ENCODE measurements at regions of chr13 and their contacts with region 1.

Region 1: GRCh38 chr13:30865123-30866049 is 40.7 kb upstream of the MEDAG start:
- DNase-seq: peak; percentile 78
- CTCF ChIP-seq: peak; percentile 93

Region 2: DNA sequence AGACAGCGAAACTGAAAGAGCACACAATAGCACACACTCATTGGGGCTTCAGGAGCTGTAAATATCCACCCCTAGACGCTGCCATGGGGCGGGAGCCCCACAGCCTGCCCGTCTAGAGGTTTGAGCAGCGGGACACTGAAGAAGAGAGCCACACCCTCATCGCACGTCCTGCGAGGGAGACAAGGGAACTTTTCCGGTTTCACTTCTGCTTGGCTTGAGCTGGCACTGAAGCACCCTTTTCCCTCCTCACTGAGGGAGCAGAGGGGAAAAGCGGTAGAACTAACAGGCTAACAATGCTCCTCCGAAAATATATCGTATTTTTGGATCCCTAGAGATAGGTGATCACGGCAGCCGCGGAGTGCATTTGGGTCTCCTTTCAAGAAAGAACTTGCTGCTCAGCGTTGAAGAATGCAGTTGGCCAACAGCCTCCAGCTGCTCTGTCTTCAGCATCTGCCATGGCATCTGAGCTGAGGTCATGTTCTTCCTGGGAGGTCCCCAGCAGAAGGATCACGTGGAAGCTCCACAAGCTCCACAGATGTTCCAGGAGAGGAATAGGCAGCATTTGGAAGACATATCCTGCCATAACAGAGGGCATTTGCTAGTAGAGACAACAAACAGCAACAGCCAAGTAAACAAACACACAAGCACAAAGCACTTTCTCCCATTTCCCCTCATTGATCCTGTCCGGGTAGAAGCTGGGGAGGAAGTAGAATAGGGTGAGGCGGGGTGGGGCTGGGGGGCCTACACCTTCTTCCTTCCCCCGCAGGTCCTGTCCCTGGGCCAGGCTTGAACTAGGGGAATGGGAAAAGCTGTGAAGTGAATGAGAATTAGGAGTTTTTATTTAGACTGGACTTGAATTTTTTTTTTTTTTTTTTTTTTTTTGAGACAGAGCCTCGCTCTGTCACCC is 174.9 kb before region 1 on chr13:
- CTCF ChIA-PET with region 1: no interaction called
- POLR2A ChIA-PET with region 1: no interaction called
- DNase-seq: no peak
- CTCF ChIP-seq: no peak

Region 3: DNA sequence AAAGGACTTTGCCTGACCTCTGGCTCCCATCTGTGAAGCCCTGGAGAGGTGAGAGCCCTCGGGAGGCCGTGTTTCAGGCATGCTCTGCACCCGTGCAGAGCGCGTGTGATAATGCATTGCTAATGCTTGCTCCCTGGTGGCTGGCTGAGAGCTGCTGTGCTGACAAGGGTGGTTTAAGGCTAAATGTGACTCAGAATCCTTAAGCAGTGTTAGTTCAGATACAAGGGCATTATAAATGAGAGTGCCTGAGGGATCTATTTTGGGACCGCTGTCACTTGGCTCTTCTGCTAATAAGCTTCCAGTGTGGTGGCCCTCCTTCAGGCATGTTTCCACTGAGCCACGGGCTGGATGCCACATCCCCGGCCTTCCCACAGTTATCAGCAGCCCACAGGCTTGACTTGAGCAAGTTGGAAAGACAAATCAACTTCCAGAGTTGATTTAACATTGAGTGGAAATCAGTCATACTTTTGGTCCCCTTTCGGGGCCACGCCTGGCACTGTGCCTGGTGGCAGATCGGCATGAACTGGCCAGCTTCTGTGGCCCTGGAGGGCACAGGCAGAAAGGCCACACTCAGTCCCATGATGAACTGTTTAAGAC is 113.1 kb before region 1 on chr13:
- CTCF ChIA-PET with region 1: no interaction called
- POLR2A ChIA-PET with region 1: no interaction called
- DNase-seq: no peak
- CTCF ChIP-seq: no peak

Region 4: DNA sequence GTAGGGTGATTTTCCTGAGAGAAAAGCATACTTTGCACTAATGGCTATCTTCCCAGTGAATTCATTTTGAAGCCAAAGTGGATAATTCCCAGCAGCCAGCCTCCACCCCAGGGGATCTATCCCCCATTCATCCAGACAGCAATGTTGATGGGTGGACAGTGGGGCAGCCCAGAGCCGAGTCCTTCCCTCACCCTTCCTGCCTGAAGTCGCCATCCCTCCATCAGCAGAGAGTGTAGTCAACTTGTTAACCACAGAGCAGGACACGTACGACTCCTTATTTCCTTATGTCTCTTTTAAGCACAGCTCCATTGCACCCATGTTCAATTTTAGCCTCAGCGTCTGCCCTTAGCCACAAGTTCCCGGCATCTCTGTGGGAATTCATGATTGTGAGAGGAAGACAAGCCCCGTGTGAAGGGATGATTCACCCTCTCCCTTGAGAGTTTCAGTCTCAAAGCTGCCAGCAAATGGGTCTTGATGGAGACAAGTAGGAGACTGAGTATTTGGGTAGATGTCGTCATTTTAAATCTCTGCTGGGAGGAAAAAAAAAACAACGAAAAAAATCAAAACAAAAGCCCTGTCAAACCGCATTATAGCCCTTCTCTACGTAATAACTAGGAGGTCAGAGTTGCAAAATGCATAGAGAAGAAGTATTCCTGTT is 17.6 kb before region 1 on chr13:
- CTCF ChIA-PET with region 1: interaction called, 30 read pairs
- POLR2A ChIA-PET with region 1: no interaction called
- DNase-seq: no peak
- CTCF ChIP-seq: no peak

Region 5: GRCh38 chr13:30880856-30881155 is 15.4 kb after region 1 on chr13:
- CTCF ChIA-PET with region 1: interaction called, 22 read pairs
- POLR2A ChIA-PET with region 1: no interaction called
- DNase-seq: no peak
- CTCF ChIP-seq: no peak

Region 6: GRCh38 chr13:30892966-30893365 is 27.6 kb after region 1 on chr13:
- CTCF ChIA-PET with region 1: interaction called, 10 read pairs
- POLR2A ChIA-PET with region 1: no interaction called
- DNase-seq: no peak
- CTCF ChIP-seq: no peak